ENCODE measurements at regions of chr14 and their contacts with region 1.

Region 1: GRCh38 chr14:106013181-106013580 is 486.8 kb downstream of the TMEM121 start:
- DNase-seq: no peak
- H3K4me3 ChIP-seq: no peak overlapping the region
- H3K4me3 Mint-ChIP-seq: no peak overlapping the region
- H3K27ac ChIP-seq: no peak overlapping the region
- H3K27ac Mint-ChIP-seq: peak overlapping the region in 2 of 8 donors; percentile 40 to 94
- H3K4me1 ChIP-seq: peaks cover 12% of the 10 kb centered on the region
- H3K4me1 Mint-ChIP-seq: peaks cover 10 to 18% (median 13%) of the 10 kb centered on the region in 3 donors
- H3K27me3 ChIP-seq: no peaks in the 10 kb centered on the region
- H3K27me3 Mint-ChIP-seq: peaks cover 14 to 37% of the 10 kb centered on the region in 2 donors

Region 2: DNA sequence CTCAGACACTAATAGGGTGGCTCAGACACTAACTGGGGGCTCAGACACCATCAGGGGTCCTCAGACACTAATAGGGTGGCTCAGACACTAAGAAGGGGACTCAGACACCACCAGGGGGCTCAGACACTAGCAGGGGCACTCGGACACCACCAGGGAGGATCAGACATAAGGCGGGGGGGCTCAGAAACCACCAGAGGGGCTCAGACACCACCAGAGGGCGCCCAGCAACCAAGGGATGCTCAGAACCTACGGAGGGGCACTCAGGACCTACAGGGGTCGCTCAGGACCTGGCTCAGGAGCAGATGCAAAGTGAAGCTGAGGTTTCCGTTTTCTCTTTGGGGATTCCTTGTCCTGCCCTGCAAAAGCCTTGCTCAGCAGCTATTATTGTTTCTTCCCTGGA is 38.3 kb before region 1 on chr14:
- CTCF ChIA-PET with region 1: interaction called, 23 read pairs
- POLR2A ChIA-PET with region 1: no interaction called
- DNase-seq: peak; percentile 55 to 83 (median 67)
- H3K4me3 ChIP-seq: no peak overlapping the region
- H3K4me3 Mint-ChIP-seq: no peak overlapping the region
- H3K27ac ChIP-seq: no peak overlapping the region
- H3K27ac Mint-ChIP-seq: peak overlapping the region in 1 of 8 donors; percentile 43
- H3K4me1 ChIP-seq: peaks cover 4% of the 10 kb centered on the region
- H3K4me1 Mint-ChIP-seq: peaks cover 0 to 10% (median 5%) of the 10 kb centered on the region in 3 donors
- H3K27me3 ChIP-seq: peaks cover 10% of the 10 kb centered on the region
- H3K27me3 Mint-ChIP-seq: peaks cover 5 to 57% of the 10 kb centered on the region in 2 donors

Measured in CD8-positive, alpha-beta memory T cell (primary cell).